ENCODE measurements at regions of chr10 and their contacts with region 1.

Region 1: DNA sequence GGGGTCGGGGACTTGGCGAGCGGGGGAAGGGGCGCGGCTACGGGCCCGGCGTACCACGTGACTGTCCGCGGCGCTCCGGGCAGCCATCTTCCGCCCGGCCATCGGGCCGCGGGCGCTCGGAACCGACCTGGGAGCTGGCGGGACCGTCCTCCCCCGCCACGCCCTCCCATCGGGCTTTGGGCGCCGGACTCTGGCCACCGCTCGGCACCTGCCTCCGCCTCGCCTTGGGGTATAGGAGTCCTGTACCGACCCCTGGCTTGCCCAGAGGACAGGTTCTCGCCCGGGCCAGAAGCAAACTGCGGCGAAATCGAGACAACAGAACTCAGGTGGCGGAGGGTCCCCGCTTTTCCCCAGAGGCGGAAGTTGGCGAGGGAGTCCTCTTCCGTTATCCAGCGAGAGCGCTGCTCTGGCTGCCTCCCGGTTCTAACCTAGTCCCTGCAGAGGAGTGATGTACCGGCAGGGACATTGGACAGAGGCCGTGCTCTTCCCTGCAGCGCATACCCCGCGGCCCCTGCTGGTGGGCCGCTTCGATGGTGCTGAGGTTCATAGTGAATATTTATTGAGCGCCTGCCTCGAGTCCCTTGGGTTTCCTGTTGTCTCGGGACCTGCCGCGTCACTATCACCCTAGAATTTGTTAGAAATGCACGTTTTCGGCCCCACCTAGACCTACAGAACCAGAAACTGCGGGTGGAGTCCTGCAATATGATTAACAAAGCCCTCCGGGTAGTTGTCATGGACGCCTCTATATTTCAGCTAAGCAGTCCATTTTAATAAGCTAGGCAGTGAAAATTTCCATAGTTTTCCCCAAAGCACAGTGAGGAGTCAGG is 1.3 kb upstream of the SGMS1 start:
- DNase-seq: peak; percentile 32 to 87 (median 67)
- ATAC-seq: peak; percentile 32
- H3K4me3 ChIP-seq: peak overlapping the region; percentile 95 to 97
- H3K4me3 Mint-ChIP-seq: peak overlapping the region; percentile 97
- H3K27ac ChIP-seq: peak overlapping the region; percentile 99 to 100
- H3K27ac Mint-ChIP-seq: peak overlapping the region; percentile 96
- H3K4me1 ChIP-seq: peaks cover 23% of the 10 kb centered on the region
- H3K4me1 Mint-ChIP-seq: peaks cover 28% of the 10 kb centered on the region
- H3K27me3 ChIP-seq: no peaks in the 10 kb centered on the region
- H3K27me3 Mint-ChIP-seq: no peaks in the 10 kb centered on the region
- CTCF ChIP-seq: peak; percentile 57

Region 2: GRCh38 chr10:49538381-49539319 is 1086.4 kb before region 1 on chr10 and contains the start of gene ERCC6:
- CTCF ChIA-PET with region 1: no interaction called
- POLR2A ChIA-PET with region 1: interaction called, 9 read pairs
- intact Hi-C with region 1: loop called (anchors 5 to 10 kb)
- DNase-seq: peak; percentile 93 to 98 (median 96)
- ATAC-seq: peak; percentile 95
- H3K4me3 ChIP-seq: peak within 1 kb of the TSS; percentile 75 to 77
- H3K4me3 Mint-ChIP-seq: peak within 1 kb of the TSS; percentile 96
- H3K27ac ChIP-seq: peak within 1 kb of the TSS; percentile 72 to 84
- H3K27ac Mint-ChIP-seq: peak within 1 kb of the TSS; percentile 96
- H3K4me1 ChIP-seq: peaks cover 9% of the 10 kb centered on the region
- H3K4me1 Mint-ChIP-seq: peaks cover 43% of the 10 kb centered on the region
- H3K27me3 ChIP-seq: no peaks in the 10 kb centered on the region
- H3K27me3 Mint-ChIP-seq: peaks cover 13% of the 10 kb centered on the region
- CTCF ChIP-seq: no peak
- total RNA-seq, gene ERCC6: 37.2 to 38.7 TPM

Region 3: DNA sequence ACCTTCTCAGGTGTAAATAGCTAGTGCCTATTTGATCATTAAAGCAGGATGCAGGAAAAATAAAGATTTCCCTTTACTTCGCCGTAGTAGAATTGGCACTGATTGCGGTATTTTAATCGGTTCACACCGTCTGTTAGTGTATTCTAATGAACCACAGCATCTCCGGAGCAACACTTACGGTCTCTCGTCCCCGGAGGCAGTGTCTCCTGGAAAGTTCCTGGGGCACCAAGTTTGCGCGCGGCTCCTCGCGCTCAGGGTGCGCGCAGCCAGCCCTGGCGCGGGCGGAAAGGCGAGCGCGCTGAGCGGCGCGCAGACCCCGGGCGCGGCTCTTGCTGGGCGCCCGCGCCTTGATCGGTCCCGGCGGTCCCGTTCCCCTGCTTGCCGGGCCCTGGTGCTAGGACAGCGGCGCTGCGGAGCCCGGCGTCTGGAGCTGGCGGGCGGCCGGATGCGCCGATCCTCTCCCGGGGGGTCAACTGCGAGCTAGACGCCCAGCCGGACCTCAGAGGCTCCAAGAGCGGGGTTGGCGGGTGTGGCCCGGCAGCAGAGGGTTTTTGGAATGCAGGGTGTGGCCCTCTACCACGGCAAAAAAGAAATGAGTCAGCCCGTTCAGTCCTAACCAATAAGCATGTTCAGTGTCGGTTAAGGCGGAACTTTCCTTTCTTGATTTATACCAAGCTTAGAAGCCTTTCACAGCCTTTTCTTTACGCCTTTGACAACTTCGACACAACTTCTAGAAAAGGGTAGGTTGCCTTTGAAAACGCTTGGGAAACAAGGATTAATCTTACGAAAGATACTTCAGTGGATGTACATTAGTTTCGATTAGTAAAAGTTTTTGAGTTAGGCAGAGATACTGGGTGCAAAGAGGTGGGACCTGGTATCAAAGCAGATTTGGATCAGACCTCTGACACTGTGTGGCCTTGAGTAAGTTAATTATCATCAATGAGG is 206.9 kb before region 1 on chr10:
- CTCF ChIA-PET with region 1: interaction called, 3 read pairs
- POLR2A ChIA-PET with region 1: interaction called, 7 read pairs
- intact Hi-C with region 1: loop called in 1 of 2 experiments (anchors 2 kb)
- DNase-seq: peak in 8 of 9 experiments; percentile 1 to 63 (median 32)
- ATAC-seq: peak; percentile 76
- H3K4me3 ChIP-seq: peak overlapping the region; percentile 40 to 54
- H3K4me3 Mint-ChIP-seq: peak overlapping the region; percentile 88
- H3K27ac ChIP-seq: no peak overlapping the region
- H3K27ac Mint-ChIP-seq: peak overlapping the region; percentile 60
- H3K4me1 ChIP-seq: peaks cover 9% of the 10 kb centered on the region
- H3K4me1 Mint-ChIP-seq: peaks cover 43% of the 10 kb centered on the region
- H3K27me3 ChIP-seq: no peaks in the 10 kb centered on the region
- H3K27me3 Mint-ChIP-seq: no peaks in the 10 kb centered on the region
- CTCF ChIP-seq: no peak

Region 4: DNA sequence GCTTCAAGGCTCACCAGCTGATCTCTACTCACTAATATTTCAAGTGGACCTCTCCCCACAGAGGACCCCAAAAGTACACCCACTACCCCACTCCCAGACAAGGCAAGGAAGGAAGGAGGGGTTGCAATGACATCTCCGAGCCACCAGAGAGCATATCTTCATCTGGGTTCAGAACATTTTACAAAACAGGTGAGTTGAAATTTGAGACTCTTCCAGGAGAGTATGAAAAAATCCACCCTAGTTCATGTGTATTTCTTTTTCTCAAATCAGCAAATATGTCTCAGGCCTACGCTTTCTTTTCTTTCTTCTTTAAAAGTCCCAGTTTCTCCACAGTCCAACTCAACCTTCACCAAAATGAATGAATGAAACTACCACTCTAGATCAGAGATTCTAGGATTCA is 63.3 kb before region 1 on chr10:
- CTCF ChIA-PET with region 1: interaction called, 6 read pairs
- POLR2A ChIA-PET with region 1: interaction called, 3 read pairs
- intact Hi-C with region 1: loop called (anchors 1 kb)
- DNase-seq: peak in 3 of 9 experiments; percentile 7 to 49 (median 33)
- ATAC-seq: peak; percentile 55
- H3K4me3 ChIP-seq: no peak overlapping the region
- H3K4me3 Mint-ChIP-seq: no peak overlapping the region
- H3K27ac ChIP-seq: no peak overlapping the region
- H3K27ac Mint-ChIP-seq: no peak overlapping the region
- H3K4me1 ChIP-seq: no peaks in the 10 kb centered on the region
- H3K4me1 Mint-ChIP-seq: peaks cover 21% of the 10 kb centered on the region
- H3K27me3 ChIP-seq: no peaks in the 10 kb centered on the region
- H3K27me3 Mint-ChIP-seq: no peaks in the 10 kb centered on the region
- CTCF ChIP-seq: peak; percentile 51

Region 5: GRCh38 chr10:50614444-50615137 is 10.5 kb before region 1 on chr10:
- CTCF ChIA-PET with region 1: interaction called, 11 read pairs
- POLR2A ChIA-PET with region 1: interaction called, 7 read pairs
- intact Hi-C with region 1: no loop called
- DNase-seq: peak in 2 of 9 experiments; percentile 42 to 51
- ATAC-seq: peak; percentile 82
- H3K4me3 ChIP-seq: no peak overlapping the region
- H3K4me3 Mint-ChIP-seq: no peak overlapping the region
- H3K27ac ChIP-seq: no peak overlapping the region
- H3K27ac Mint-ChIP-seq: no peak overlapping the region
- H3K4me1 ChIP-seq: peaks cover 12% of the 10 kb centered on the region
- H3K4me1 Mint-ChIP-seq: peaks cover 71% of the 10 kb centered on the region
- H3K27me3 ChIP-seq: no peaks in the 10 kb centered on the region
- H3K27me3 Mint-ChIP-seq: no peaks in the 10 kb centered on the region
- CTCF ChIP-seq: peak; percentile 45

Region 6: DNA sequence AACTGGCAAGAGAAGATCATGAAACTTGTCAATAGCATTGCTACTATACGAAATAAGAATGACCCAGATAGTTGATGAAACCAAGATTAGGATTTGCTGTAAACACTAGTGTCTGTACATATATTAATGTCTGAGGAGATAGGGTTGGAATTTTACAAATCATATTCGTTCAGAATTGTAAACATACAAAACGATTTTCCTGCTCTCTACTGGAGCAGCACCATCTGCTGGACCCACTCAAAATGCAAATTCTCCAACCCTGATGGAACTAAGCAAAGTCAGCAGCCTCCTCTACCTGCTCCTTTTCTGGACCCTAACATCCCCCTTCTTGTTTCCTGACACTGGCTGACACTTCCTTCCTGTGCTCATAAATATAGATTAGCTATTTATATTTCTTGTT is 28.1 kb after region 1 on chr10:
- CTCF ChIA-PET with region 1: interaction called, 18 read pairs
- POLR2A ChIA-PET with region 1: interaction called, 4 read pairs
- intact Hi-C with region 1: loop called (anchors 1 to 2 kb)
- DNase-seq: peak in 3 of 9 experiments; percentile 31 to 63 (median 52)
- ATAC-seq: peak; percentile 78
- H3K4me3 ChIP-seq: no peak overlapping the region
- H3K4me3 Mint-ChIP-seq: no peak overlapping the region
- H3K27ac ChIP-seq: no peak overlapping the region
- H3K27ac Mint-ChIP-seq: no peak overlapping the region
- H3K4me1 ChIP-seq: peaks cover 10% of the 10 kb centered on the region
- H3K4me1 Mint-ChIP-seq: peaks cover 12% of the 10 kb centered on the region
- H3K27me3 ChIP-seq: no peaks in the 10 kb centered on the region
- H3K27me3 Mint-ChIP-seq: no peaks in the 10 kb centered on the region
- CTCF ChIP-seq: peak; percentile 58

Region 7: GRCh38 chr10:50788951-50789945 is 164.2 kb after region 1 on chr10:
- CTCF ChIA-PET with region 1: no interaction called
- POLR2A ChIA-PET with region 1: no interaction called
- intact Hi-C with region 1: no loop called
- DNase-seq: no peak
- ATAC-seq: no peak
- H3K4me3 ChIP-seq: no peak overlapping the region
- H3K4me3 Mint-ChIP-seq: no peak overlapping the region
- H3K27ac ChIP-seq: no peak overlapping the region
- H3K27ac Mint-ChIP-seq: no peak overlapping the region
- H3K4me1 ChIP-seq: no peaks in the 10 kb centered on the region
- H3K4me1 Mint-ChIP-seq: peaks cover 6% of the 10 kb centered on the region
- H3K27me3 ChIP-seq: no peaks in the 10 kb centered on the region
- H3K27me3 Mint-ChIP-seq: peaks cover 5% of the 10 kb centered on the region
- CTCF ChIP-seq: no peak

Region 8: GRCh38 chr10:51699475-51700227 is 1074.6 kb after region 1 on chr10 and contains the start of gene CSTF2T:
- CTCF ChIA-PET with region 1: no interaction called
- POLR2A ChIA-PET with region 1: interaction called, 3 read pairs
- intact Hi-C with region 1: loop called in 1 of 2 experiments (anchors 5 kb)
- DNase-seq: peak; percentile 79 to 97 (median 92)
- ATAC-seq: peak; percentile 88
- H3K4me3 ChIP-seq: peak within 1 kb of the TSS; percentile 84 to 86
- H3K4me3 Mint-ChIP-seq: peak within 1 kb of the TSS; percentile 99
- H3K27ac ChIP-seq: peak within 1 kb of the TSS; percentile 94 to 95
- H3K27ac Mint-ChIP-seq: peak within 1 kb of the TSS; percentile 100
- H3K4me1 ChIP-seq: peaks cover 43% of the 10 kb centered on the region
- H3K4me1 Mint-ChIP-seq: peaks cover 53% of the 10 kb centered on the region
- H3K27me3 ChIP-seq: no peaks in the 10 kb centered on the region
- H3K27me3 Mint-ChIP-seq: no peaks in the 10 kb centered on the region
- CTCF ChIP-seq: no peak
- total RNA-seq, gene CSTF2T: 26.0 to 28.2 TPM